CD8-positive, alpha-beta T cell (primary cell): ENCODE measurements at regions of chr10 and their contacts with region 1.

Region 1: DNA sequence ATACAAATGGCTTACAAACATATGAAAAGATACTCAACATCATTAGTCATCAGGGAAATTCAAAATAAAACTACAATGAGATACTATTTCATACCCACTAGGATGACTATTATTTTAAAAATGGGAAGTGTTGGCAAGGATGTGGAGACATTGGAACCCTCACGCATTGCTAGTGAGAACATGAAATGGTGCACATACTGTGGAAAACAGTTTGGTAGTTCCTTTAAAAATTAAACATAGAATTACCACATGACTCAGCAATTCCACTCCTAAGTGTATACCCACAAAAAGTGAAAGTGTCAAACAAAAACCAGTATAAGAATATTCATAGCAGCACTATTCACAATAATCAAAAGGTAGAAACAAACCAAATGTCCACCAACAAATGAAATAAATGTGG is 48.5 kb upstream of the SHTN1 start:
- DNase-seq: no peak
- ATAC-seq: no peak
- H3K4me3 ChIP-seq: no peak overlapping the region
- H3K4me3 Mint-ChIP-seq: no peak overlapping the region
- H3K27ac ChIP-seq: no peak overlapping the region
- H3K27ac Mint-ChIP-seq: no peak overlapping the region
- H3K4me1 ChIP-seq: no peaks in the 10 kb centered on the region
- H3K4me1 Mint-ChIP-seq: no peaks in the 10 kb centered on the region
- H3K27me3 ChIP-seq: no peaks in the 10 kb centered on the region
- H3K27me3 Mint-ChIP-seq: peaks cover 7% of the 10 kb centered on the region
- CTCF ChIP-seq: no peak

Region 2: DNA sequence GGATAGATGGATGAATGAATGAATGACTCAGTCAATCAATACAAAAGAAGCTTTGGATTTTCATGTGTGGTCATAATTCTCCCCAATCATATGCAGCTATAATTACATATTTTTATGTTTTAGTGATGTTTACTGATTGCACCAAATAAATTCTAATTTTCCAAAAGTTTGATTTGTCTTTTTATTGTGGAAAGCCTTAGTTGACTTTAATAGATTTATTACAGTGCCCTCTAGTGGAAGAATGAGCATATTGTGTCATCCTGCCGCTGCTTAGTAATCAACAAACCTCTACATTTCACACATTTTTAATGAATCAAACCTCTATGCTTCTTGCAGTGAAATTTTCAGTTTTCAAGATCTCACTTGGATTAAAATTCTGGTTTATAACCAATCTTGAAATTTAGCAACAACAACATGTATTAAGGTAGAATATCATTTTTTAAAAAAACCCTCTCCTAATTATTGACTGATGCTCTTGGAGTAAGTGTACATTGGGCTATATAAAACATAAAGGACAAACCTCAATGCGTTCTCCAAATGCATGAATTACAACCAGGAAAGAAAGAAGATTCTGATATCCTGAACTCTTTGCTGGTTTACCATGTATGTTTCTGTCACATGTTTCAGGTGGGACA is 563.3 kb before region 1 on chr10:
- CTCF ChIA-PET with region 1: no interaction called
- POLR2A ChIA-PET with region 1: no interaction called
- intact Hi-C with region 1: loop called in 1 of 2 experiments (anchors 5 kb)
- DNase-seq: peak in 1 of 9 experiments; percentile 4
- ATAC-seq: no peak
- H3K4me3 ChIP-seq: no peak overlapping the region
- H3K4me3 Mint-ChIP-seq: no peak overlapping the region
- H3K27ac ChIP-seq: no peak overlapping the region
- H3K27ac Mint-ChIP-seq: no peak overlapping the region
- H3K4me1 ChIP-seq: no peaks in the 10 kb centered on the region
- H3K4me1 Mint-ChIP-seq: no peaks in the 10 kb centered on the region
- H3K27me3 ChIP-seq: no peaks in the 10 kb centered on the region
- H3K27me3 Mint-ChIP-seq: no peaks in the 10 kb centered on the region
- CTCF ChIP-seq: peak; percentile 42